AG04450 (cell line): ENCODE measurements at regions of chr3 and their contacts with region 1.

Region 1: DNA sequence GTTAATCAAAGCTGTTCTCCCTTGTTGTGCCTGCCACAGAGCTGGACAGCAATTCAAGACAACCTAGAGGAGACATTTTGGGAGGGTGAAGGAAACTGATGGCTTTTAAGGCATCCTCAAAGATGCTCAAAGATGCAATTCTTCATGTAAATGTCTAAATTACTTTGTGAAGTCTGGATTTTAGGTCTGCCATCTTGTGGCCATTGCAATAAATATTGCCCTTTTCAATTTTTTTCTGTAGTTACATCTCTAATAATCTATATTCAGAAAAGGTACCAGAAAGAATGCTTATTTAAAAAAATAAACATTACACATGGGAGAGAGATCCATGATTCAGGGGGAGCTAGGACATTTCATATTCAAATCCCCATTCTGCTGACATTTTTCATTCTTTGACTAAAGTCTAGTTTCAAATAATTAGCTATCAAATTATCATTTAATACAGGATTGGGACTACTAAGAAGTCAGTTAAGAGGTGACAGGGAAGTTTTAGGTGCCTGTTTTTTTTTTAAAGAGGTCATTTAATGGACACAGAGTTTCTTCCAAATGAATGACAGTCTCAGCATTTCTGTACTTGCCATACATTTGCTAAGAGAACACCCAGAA is 259.8 kb upstream of the WNT5A start:
- DNase-seq: no peak
- H3K4me3 ChIP-seq: no peak overlapping the region
- H3K27ac ChIP-seq: no peak overlapping the region
- H3K27me3 ChIP-seq: no peaks in the 10 kb centered on the region
- CTCF ChIP-seq: peak; percentile 56

Region 2: DNA sequence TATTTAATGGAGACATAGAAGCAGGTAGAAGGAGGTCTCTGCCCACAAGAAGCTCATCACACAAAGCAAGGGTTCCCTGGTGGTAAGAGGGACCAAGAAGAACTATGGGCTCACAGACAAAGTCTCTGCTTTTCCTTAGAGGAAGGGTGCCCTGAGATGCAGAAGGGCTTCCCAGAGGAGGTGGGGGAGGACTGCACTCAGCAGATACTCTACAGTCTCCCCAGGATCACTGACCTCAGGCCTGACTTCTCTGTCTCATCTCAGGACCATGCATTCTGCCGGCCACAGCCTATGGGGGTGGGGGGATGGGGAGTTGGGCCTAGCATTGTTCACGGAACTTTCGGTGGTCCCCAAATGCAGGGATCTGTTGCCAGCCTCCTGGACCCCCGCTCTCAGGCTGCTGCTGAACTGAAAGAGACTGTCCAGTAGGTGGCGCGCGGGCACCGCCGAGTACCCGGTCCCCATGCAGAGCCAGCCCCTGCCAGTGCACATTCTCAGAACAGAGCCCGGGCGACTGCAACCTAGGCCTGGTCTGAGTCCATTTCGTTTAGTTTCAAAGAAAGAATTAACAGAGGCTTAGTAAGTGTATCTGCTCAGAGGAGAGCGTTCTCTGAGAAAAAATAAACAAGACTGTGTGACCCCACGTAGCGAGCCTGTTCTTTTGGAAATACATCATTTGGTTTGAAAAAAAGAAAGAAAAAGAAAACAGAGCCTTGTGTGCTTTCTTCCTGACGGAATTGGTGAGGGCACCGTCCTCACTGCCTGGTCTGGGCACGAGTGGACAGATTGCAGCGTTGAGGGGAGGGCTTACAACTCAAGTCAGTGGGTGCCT is 893.1 kb before region 1 on chr3:
- CTCF ChIA-PET with region 1: interaction called, 12 read pairs
- POLR2A ChIA-PET with region 1: no interaction called
- DNase-seq: peak; percentile 27
- H3K4me3 ChIP-seq: no peak overlapping the region
- H3K27ac ChIP-seq: no peak overlapping the region
- H3K27me3 ChIP-seq: no peaks in the 10 kb centered on the region
- CTCF ChIP-seq: peak; percentile 85

Region 3: DNA sequence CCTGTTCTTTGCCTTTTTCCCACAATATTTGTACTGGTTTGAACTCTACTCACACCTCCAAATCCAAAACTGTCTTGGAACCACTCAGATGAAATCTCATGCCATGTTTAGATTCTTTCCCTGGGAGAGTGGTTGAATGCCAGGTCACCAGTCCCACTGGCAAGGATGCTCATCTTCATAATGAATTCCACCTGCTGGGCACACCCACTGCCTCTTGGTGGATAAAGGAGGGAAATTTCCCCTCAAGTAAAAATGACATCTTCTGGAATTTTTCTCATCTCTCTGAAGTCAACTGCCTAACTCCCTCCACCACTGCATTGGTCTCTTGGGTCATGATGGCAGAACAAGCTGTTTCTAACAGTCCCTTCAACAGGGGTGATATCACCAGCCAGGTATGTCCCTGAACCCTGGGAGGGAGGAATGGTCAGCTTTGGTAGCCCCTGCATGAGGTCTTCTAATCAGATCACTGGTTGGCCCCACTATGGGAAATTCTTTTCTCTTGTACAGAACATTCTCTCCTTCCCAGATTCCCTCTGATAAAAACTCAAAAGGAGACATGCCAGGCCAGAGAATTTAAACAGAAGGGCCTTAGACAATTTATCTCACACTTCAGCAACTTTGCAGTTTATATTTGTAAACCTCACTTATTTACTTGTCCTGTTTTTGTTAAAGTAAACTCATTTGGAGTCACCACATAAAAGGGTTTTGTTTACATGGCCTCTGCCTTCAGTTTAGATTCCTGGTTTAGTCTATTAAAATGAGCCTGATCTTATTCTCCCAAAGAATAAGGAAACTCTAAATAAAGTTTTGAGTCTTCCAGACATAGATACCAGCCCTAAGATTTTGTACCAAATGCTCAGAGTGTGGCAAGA is 403.2 kb before region 1 on chr3:
- CTCF ChIA-PET with region 1: no interaction called
- POLR2A ChIA-PET with region 1: no interaction called
- DNase-seq: no peak
- H3K4me3 ChIP-seq: no peak overlapping the region
- H3K27ac ChIP-seq: no peak overlapping the region
- H3K27me3 ChIP-seq: no peaks in the 10 kb centered on the region
- CTCF ChIP-seq: no peak

Region 4: DNA sequence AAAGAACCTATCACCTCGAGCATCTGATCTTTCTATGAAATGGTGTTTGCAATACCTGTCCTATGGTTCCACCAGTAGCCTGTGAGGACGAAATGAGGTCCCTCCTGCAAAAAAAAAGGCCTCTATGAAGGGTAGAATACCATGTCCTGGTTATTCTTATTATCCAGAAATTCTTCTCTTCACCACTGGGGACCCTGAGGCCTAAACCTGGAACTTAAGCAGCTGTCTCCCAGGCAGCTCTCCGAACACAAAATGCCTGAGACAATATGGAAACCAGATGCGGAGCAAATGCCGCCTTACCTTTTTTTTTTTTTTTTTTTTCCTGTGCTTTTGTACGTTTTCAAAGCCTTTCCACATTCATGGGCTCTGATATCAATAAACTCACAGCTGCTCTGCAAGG is 197.7 kb before region 1 on chr3:
- CTCF ChIA-PET with region 1: interaction called, 13 read pairs
- POLR2A ChIA-PET with region 1: no interaction called
- DNase-seq: no peak
- H3K4me3 ChIP-seq: no peak overlapping the region
- H3K27ac ChIP-seq: no peak overlapping the region
- H3K27me3 ChIP-seq: peaks cover 4% of the 10 kb centered on the region
- CTCF ChIP-seq: peak; percentile 48

Region 5: DNA sequence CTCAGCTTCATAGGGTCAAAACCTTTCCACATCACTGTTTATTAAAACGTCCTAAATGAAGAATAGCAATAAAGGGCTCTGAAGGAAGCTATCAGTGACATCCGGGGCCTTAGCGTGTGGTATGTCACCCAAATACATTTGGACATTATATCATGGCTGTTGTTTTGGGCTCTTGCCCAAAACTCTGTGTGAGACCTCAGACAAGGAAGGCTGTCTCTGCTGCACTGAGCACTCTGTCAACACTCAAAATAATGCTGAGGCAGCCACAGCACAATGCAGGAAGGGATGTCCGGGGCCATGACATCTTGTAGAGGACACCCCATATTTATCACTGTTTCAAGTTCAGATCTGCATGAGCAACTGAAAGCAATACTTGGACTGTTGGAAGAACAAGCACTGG is 34.0 kb after region 1 on chr3:
- CTCF ChIA-PET with region 1: no interaction called
- POLR2A ChIA-PET with region 1: no interaction called
- DNase-seq: no peak
- H3K4me3 ChIP-seq: no peak overlapping the region
- H3K27ac ChIP-seq: no peak overlapping the region
- H3K27me3 ChIP-seq: peaks cover 2% of the 10 kb centered on the region
- CTCF ChIP-seq: no peak